Posterior vena cava (tissue), 2 donors: ENCODE measurements at regions of chr5 and their contacts with region 1.

Region 1: DNA sequence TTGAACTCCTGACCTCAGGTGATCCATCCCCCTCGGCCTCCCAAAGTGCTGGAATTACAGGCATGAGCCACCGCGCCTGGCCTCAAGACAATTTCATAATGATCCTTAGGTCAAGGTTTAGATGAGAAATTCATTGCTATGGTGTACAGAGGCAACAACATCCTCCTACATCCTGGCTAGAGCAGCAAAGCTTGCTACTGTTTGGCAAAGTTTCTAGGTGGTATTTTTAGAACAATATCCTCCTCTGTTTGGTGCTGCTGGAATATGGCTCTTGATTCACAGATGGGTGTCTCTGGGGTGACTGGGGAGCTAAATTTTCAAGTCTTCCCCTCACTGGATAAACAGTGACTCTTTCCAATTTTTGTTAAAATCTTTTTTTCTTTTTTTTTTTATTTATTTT is 30.6 kb downstream of the CRHBP start:
- DNase-seq: no peak

Region 2: GRCh38 chr5:76888733-76889300 is 94.7 kb before region 1 on chr5:
- intact Hi-C with region 1: no loop called
- DNase-seq: no peak

Region 3: GRCh38 chr5:77008413-77008812 is 24.9 kb after region 1 on chr5:
- intact Hi-C with region 1: loop called in 1 of 2 experiments (anchors 2 kb)
- DNase-seq: no peak